H1 (cell line): ENCODE measurements at regions of chr10 and their contacts with region 1.

Region 1: GRCh38 chr10:88810196-88810961 is 7.8 kb downstream of the LIPM start:
- DNase-seq: no peak
- H3K4me3 ChIP-seq: no peak overlapping the region
- H3K27ac ChIP-seq: no peak overlapping the region
- H3K4me1 ChIP-seq: no peaks in the 10 kb centered on the region
- H3K27me3 ChIP-seq: no peaks in the 10 kb centered on the region
- CTCF ChIP-seq: peak; percentile 31 to 73 (median 71)
- EP300 ChIP-seq: no peak
- POLR2A ChIP-seq: no peak
- RAD21 ChIP-seq: peak; percentile 66 to 69

Region 2: GRCh38 chr10:88592381-88592780 is 218.0 kb before region 1 on chr10:
- CTCF ChIA-PET with region 1: no interaction called
- POLR2A ChIA-PET with region 1: no interaction called
- DNase-seq: no peak
- H3K4me3 ChIP-seq: no peak overlapping the region
- H3K27ac ChIP-seq: no peak overlapping the region
- H3K4me1 ChIP-seq: no peaks in the 10 kb centered on the region
- H3K27me3 ChIP-seq: peaks cover 0 to 1% (median 0%) of the 10 kb centered on the region in 4 experiments; a peak in 1 of 7 replicates
- CTCF ChIP-seq: no peak
- EP300 ChIP-seq: no peak
- POLR2A ChIP-seq: no peak
- RAD21 ChIP-seq: no peak

Region 3: DNA sequence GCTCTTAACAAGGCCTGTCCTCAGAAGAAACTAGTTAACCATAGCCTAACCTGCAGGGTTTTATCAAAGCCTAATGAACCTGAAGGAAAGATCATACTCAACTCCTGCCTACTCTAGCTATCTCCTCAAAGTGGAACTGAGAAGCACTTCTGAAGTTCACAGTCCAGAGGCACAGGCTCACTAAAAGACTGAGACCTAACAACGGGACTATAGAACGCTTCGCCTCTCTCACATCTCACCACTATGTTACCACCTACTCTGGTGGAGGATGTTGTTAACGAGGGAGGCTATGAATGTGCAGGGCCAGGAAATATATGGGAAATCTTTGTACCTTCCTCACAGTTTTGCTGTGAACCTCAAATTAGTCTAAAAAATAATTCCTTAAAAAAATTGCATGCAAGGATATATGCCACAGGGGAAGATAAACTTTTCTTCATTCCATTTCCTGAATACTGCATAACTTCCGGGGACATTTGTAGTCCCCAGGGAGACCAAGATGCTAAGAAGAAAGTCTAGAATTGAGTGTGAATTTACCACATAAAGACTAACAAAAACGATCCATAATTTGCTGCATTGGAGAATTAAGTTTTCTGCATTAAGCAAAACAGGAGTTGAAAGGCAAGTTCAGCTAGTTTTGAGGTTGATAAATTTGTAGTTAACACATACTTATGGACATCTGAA is 202.2 kb before region 1 on chr10:
- CTCF ChIA-PET with region 1: no interaction called
- POLR2A ChIA-PET with region 1: no interaction called
- DNase-seq: no peak
- H3K4me3 ChIP-seq: no peak overlapping the region
- H3K27ac ChIP-seq: no peak overlapping the region
- H3K4me1 ChIP-seq: no peaks in the 10 kb centered on the region
- H3K27me3 ChIP-seq: peaks cover 0 to 1% (median 0%) of the 10 kb centered on the region in 4 experiments; a peak in 1 of 7 replicates
- CTCF ChIP-seq: no peak
- EP300 ChIP-seq: no peak
- POLR2A ChIP-seq: no peak
- RAD21 ChIP-seq: no peak

Region 4: DNA sequence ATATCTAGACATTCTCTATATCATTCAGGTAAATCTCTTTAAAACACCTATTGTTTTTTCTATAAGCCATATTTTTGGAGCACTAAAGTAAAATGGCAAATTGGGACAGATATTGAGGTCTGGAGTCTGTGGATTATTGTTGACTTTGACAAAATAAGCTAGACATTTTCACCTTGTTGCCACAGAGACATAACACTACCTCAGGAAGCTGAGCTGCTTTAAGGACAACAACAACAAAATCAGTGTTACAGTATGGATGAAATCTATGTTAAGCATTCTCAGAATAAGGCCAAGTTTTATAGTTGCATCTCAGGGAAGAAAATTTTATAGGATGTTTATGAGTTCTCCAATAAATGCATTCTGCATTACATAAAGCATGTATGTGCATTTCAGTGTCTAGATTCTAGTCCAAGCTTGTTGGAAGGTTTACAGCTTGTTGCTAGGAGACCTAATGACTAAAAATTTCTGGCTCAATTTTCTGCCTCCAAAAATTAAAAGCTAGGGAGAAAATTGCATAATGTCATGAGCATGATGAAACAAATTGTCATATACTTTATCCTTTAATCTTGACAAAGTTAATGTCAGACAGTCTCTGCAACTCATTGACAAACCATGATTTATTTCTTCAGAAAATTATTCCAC is 10.5 kb after region 1 on chr10:
- CTCF ChIA-PET with region 1: interaction called, 12 read pairs
- POLR2A ChIA-PET with region 1: no interaction called
- DNase-seq: no peak
- H3K4me3 ChIP-seq: no peak overlapping the region
- H3K27ac ChIP-seq: no peak overlapping the region
- H3K4me1 ChIP-seq: no peaks in the 10 kb centered on the region
- H3K27me3 ChIP-seq: no peaks in the 10 kb centered on the region
- CTCF ChIP-seq: no peak
- EP300 ChIP-seq: no peak
- POLR2A ChIP-seq: no peak
- RAD21 ChIP-seq: no peak

Region 5: GRCh38 chr10:88828310-88828709 is 17.9 kb after region 1 on chr10:
- CTCF ChIA-PET with region 1: interaction called, 13 read pairs
- POLR2A ChIA-PET with region 1: interaction called, 3 read pairs
- DNase-seq: no peak
- H3K4me3 ChIP-seq: no peak overlapping the region
- H3K27ac ChIP-seq: no peak overlapping the region
- H3K4me1 ChIP-seq: no peaks in the 10 kb centered on the region
- H3K27me3 ChIP-seq: no peaks in the 10 kb centered on the region
- CTCF ChIP-seq: no peak
- EP300 ChIP-seq: no peak
- POLR2A ChIP-seq: no peak
- RAD21 ChIP-seq: no peak